GM13977 (cell line): ENCODE measurements at regions of chr12 and their contacts with region 1.

Region 1: DNA sequence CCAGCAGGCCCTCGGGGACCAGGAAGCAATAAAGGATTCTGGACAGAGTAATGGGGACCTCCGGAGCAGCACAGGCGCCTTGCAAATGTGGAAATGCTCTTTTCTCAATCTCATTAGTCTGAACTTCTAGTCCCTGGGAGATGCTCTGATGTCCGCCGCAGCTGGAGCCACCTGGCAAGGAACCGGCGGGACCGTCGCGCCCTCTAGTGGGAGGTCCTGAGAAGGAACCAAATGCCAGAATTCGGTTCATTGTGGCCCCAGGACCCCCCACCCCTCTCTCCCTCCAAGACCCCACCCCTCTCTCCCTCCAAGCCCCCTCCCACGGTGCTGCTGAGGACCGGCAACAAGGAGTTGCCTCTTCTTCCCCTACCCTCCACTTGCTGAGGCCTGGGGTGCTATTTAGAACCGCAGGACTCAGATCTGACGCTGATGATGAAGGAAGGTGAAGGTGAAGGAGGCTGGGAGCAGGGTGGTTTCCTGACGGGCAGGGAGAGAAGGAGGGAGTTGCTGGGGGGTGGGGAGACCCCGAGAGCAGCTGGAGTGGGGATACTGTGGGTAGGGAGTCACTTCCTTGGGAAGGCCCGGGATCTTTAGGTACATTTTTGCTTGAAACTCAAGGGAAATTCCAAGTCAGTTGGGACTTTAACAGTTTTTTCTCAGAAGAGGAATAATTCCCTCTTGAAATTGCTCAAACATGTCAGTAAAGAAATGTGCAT is 42.5 kb downstream of the SMIM41 start:
- DNase-seq: peak; percentile 79
- CTCF ChIP-seq: peak; percentile 87

Region 2: GRCh38 chr12:52023182-52023975 is 98.6 kb before region 1 on chr12:
- in situ Hi-C with region 1: loop called (anchors 10 kb)
- DNase-seq: peak; percentile 96
- CTCF ChIP-seq: peak; percentile 93